K562 (cell line): ENCODE measurements at regions of chr2 and their contacts with region 1.

Region 1: DNA sequence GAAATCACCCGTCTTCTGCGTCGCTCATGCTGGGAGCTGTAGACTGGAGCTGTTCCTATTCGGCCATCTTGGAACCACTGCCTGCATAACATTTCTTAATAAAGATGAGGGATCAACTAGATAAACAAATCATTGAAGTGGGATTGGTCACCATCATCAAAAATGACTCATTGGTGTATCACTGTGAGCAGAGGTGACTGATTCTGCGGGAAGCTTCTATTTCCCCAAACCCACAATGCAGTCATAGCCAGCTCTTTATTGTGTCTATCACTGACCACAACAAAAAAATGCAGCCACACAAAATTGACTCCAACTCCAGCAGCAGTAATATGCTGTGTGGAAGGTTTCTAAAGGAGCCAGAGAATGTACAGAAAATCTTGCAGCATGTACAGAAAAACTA is 630.7 kb upstream of the HS6ST1 start:
- DNase-seq: no peak
- ATAC-seq: no peak
- H3K4me3 ChIP-seq: no peak overlapping the region
- H3K27ac ChIP-seq: no peak overlapping the region
- H3K4me1 ChIP-seq: no peaks in the 10 kb centered on the region
- H3K27me3 ChIP-seq: peaks cover 0 to 11% of the 10 kb centered on the region in 2 experiments; a peak in 2 of 5 replicates
- CTCF ChIP-seq: no peak
- EP300 ChIP-seq: no peak
- POLR2A ChIP-seq: no peak
- RAD21 ChIP-seq: no peak

Region 2: GRCh38 chr2:128549646-128550260 is 399.6 kb before region 1 on chr2:
- CTCF ChIA-PET with region 1: no interaction called
- POLR2A ChIA-PET with region 1: no interaction called
- in situ Hi-C with region 1: no loop called
- intact Hi-C with region 1: no loop called
- DNase-seq: no peak
- ATAC-seq: no peak
- H3K4me3 ChIP-seq: no peak overlapping the region
- H3K27ac ChIP-seq: no peak overlapping the region
- H3K4me1 ChIP-seq: no peaks in the 10 kb centered on the region
- H3K27me3 ChIP-seq: peaks cover 3 to 42% of the 10 kb centered on the region in 2 experiments; a peak in 3 of 5 replicates
- CTCF ChIP-seq: no peak
- EP300 ChIP-seq: no peak
- POLR2A ChIP-seq: no peak
- RAD21 ChIP-seq: no peak

Region 3: GRCh38 chr2:128967646-128968045 is 18.3 kb after region 1 on chr2:
- CTCF ChIA-PET with region 1: no interaction called
- POLR2A ChIA-PET with region 1: no interaction called
- in situ Hi-C with region 1: no loop called
- intact Hi-C with region 1: loop called (anchors 2 kb)
- DNase-seq: no peak
- ATAC-seq: no peak
- H3K4me3 ChIP-seq: no peak overlapping the region
- H3K27ac ChIP-seq: no peak overlapping the region
- H3K4me1 ChIP-seq: no peaks in the 10 kb centered on the region
- H3K27me3 ChIP-seq: no peaks in the 10 kb centered on the region; a peak in 1 of 5 replicates
- CTCF ChIP-seq: no peak
- EP300 ChIP-seq: no peak
- POLR2A ChIP-seq: no peak
- RAD21 ChIP-seq: no peak